ENCODE measurements at regions of chr12 and their contacts with region 1.

Region 1: DNA sequence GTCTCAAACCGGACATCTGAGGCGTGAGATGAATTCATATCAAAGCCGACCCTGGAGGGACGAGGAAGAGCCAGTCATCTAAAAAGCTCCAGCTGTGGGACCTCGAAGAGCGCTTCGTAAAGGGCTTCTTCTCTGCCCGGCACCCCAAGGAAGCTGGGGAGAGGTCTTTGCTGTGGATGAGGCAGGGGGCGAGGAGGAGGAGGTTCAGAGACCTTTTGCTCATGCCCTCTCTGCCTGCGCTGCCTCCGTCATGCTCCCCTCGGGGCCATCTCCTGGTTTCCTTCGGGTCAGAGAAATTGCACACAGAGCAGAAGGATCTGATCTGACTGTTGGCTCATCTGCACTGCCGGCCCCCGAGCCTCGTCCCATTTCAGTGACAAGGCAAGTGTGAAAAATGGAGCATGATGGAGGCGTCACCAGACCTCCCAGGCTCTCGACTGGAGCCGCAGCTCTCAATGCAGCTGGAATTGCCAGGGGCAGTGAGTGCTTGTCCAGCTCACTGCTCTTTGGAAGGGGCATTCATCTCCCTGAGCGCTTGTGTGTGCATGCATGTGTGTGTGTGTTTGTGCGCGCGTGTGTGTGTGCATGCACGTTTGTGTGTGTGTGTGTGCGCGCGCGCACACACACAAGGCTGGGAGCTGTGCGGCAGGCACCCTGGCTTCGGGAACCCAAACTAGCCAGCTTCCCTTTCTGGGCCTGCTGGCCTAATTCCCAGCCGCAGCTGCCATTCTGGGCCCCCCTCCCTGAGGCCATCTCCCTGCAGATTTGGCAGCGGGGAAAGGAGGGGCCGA is 9.2 kb downstream of the CABP1 start:
- H3K4me3 Mint-ChIP-seq: peak overlapping the region; percentile 68
- H3K27ac Mint-ChIP-seq: peak overlapping the region; percentile 54
- H3K4me1 Mint-ChIP-seq: peaks cover 62% of the 10 kb centered on the region
- H3K27me3 Mint-ChIP-seq: peaks cover 46% of the 10 kb centered on the region

Region 2: DNA sequence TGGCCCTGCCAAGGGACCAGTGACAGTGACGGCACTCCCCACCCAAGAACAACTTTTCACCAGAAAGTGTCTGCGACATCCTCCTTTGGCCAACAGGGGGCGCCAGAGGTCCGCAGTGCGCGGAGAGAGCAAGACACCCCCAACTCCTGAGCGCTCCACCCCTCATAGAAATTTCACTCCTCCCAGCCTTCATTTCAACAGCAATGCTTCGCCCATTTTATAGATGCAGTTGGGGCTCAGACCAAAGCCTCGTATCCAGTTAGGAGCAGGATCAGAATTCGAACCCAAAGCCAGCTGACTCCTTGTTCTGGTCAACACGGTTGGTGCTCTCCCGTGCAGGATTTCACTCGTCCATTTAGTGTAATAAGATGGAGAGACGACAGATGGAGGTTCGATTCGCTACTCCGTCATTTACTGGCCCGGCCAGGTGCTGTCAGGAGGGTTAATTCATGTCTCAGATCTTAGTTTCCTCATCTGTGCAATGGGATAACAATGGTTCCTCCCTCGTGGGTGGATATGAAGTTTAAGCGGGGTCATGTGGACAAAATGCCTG is 66.1 kb before region 1 on chr12:
- intact Hi-C with region 1: loop called (anchors 2 kb)
- H3K4me3 Mint-ChIP-seq: peak overlapping the region; percentile 42
- H3K27ac Mint-ChIP-seq: no peak overlapping the region
- H3K4me1 Mint-ChIP-seq: peaks cover 33% of the 10 kb centered on the region
- H3K27me3 Mint-ChIP-seq: peaks cover 32% of the 10 kb centered on the region

Region 3: GRCh38 chr12:120686690-120687577 is 37.3 kb after region 1 on chr12 and contains the start of gene MLEC:
- intact Hi-C with region 1: loop called (anchors 5 kb)
- H3K4me3 Mint-ChIP-seq: peak within 1 kb of the TSS; percentile 88
- H3K27ac Mint-ChIP-seq: peak within 1 kb of the TSS; percentile 98
- H3K4me1 Mint-ChIP-seq: peaks cover 65% of the 10 kb centered on the region
- H3K27me3 Mint-ChIP-seq: no peaks in the 10 kb centered on the region

Region 4: GRCh38 chr12:120710031-120710804 is 60.6 kb after region 1 on chr12 and contains the start of gene UNC119B:
- intact Hi-C with region 1: loop called (anchors 1 kb)
- H3K4me3 Mint-ChIP-seq: peak within 1 kb of the TSS; percentile 90
- H3K27ac Mint-ChIP-seq: peak within 1 kb of the TSS; percentile 80
- H3K4me1 Mint-ChIP-seq: peaks cover 27% of the 10 kb centered on the region
- H3K27me3 Mint-ChIP-seq: no peaks in the 10 kb centered on the region

Measured in dendritic cell treated with granulocyte-macrophage colony-stimulating factor and Interleukin-4, amounts not matched to agents 40 ng/mL and 50 ng/mL, for 4 days (primary cell).